ENCODE measurements at regions of chr13 and their contacts with region 1.

Region 1: DNA sequence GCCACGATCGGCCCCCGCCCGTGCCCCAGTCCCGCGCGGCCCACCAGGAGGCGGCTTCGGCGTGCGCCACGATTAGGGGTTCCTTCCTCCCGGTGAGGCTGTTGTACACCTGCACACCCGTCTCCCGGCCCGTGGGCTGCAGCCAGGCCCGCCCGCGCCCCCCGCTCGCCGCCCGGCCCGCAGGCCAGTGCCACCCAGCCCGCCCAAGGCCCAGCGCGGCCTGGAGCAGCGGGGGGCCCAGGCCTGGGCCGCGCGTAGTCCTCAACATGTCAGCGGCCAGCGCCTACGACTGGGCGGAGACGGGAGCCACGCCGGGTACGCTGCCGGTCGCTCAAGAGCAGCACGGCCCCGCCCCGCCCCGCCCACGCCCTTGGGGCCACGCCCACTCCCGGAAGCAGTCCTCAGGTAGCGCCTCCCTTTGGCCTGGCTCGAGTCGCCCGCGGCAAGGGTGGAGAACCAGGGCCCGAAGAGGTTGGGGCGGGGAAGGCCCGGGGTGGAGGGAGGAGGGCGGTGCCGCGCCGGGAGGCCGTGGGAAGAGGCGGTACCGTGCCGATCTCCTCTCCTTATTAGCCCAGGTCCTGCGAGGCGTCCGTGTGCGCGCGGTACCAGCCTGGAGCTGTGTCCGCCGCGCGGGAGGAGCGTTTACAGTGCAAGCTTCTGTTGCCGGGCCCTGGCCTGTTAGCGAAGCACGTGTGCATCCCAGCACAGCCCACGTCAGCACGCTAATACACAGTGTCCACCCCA is at the start of gene CARS2:
- DNase-seq: peak; percentile 96
- ATAC-seq: peak; percentile 97 to 99
- total RNA-seq, gene CARS2: 36.6 to 37.9 TPM

Region 2: DNA sequence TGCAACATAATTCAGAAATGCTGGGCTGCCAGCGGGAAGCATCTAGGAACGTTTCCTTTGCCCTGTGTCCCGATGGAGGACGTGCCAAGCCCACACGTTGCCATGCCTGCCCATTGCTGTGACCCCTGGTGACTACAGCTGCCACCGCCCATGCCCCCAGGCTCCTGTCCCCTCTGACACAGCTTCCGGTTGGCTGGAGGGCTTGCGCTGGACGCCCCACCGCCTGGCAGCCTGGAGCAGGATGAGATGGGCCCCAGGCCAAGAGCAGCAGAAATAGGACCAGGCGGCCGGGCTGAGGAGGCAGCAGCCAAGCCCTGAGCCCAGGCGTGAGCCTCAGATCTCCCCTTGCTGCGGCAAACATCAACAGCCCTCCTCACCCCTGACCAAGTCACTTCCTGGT is 273.0 kb before region 1 on chr13:
- intact Hi-C with region 1: no loop called
- DNase-seq: peak; percentile 81
- ATAC-seq: peak; percentile 81

Region 3: GRCh38 chr13:110615322-110616102 is 90.5 kb before region 1 on chr13 and contains the start of gene NAXD:
- intact Hi-C with region 1: loop called in 1 of 2 experiments (anchors 10 kb)
- DNase-seq: peak; percentile 96
- ATAC-seq: peak; percentile 97
- total RNA-seq, gene NAXD: 23.7 to 27.0 TPM

Region 4: DNA sequence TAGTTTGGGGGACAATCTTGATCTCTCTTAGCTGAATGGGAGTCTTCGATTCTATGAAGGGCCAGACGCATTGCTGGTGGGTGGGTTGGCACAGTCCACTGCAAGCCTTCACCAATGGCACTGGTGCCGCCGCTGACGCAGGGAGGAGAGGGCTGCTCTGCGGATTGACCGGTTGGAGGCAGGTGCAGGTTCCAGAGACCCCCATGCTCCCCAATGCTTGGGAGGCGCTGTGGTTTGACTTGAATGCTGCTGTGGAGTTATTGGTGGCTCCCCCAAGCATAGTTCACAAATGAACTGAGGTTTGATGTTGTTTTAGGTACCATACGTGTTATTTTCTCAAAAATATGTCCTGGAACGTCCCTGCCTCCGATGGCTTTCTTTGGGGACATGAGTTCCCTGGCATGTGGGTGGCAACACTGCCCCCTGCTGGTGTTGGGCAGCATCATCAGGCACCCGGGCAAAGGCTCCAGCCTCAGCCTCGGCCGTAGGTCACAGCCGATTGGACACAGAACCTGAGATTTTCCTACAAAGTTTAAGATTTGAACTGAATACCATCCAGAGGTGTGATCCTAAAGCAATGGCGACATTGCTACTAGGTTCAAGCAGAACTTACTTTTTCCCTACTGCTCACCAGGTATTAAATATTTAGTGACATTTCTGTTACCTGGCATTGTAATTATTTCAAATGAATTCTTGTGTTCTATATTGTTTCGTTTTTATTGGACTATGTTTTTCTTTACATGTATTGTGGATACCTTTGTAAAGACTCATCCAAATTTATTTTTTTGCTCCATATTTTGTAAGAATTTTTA is 113.4 kb after region 1 on chr13:
- intact Hi-C with region 1: loop called in 1 of 2 experiments (anchors 10 kb)
- DNase-seq: peak; percentile 85
- ATAC-seq: peak; percentile 91 to 94